Right cardiac atrium (tissue), 5 donors: ENCODE measurements at regions of chr5 and their contacts with region 1.

Region 1: DNA sequence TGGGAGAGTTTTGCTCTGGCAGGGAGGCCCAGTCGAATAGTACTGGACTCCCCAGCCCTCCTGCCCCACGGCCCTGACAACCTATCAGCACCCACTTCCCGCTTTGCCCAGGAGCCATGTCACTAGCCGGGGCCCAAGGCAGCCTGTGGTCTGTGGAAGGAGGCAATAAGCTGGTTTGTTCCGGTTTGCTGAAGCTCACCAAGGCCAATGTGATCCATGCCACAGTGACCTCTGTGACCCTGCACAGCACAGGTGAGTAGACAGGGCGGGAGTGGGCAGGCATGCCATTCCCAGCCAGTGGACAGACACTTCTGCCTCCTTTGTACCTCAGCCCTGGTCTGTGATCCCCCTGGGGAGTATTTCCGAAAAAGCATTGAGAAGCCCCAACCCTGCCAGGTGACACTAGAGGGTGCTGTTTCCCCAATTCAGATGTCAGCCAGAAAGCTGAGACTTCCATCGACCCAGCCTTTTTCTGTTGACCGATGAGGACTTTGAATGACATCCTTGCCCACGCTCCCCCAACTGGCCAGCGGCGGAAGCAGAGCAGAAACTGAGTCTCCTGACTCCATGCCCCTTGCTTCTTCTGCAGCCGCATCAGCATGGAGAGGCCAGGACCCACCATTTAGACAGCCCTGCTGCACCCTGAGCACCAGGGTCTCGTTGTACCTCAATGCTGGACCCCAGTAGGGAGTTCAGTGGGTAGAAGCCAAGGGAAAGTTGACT is 9.6 kb downstream of the PCYOX1L start:
- DNase-seq: peak; percentile 63 to 75 (median 71)
- ATAC-seq: peak; percentile 52 to 58
- H3K4me3 ChIP-seq: no peak overlapping the region
- H3K27ac ChIP-seq: no peak overlapping the region
- H3K4me1 ChIP-seq: no peaks in the 10 kb centered on the region
- H3K27me3 ChIP-seq: no peaks in the 10 kb centered on the region

Region 2: DNA sequence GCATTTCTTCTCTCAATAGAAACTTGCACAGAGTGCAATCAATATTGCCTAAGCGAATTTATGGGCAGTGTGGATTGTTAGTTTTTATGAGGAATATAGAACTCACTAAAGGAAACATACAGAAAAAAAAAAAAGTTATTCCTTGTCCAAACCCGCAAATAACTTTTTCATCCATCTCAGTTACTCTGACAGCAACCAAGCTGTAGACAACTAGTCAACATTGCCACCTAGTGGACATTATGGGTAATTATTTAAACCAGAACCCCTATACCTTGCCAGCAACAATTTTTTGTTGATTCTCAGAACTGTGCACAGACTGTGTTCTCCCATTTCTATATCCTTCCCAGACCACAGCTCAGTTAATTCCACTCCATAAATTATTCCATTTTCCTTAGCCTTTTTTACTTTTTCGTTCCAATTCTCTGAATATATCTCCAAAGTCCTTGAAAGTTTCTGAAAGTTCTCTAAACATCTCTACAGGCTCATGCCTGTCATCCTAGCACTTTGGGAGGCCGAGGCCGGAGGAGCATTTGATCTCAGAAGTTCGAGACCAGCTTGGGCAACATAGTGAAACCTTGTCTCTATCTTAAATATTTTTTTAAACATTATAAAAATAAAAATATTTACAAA is 98.4 kb before region 1 on chr5:
- intact Hi-C with region 1: loop called in 3 of 4 experiments (anchors 5 to 10 kb)
- DNase-seq: no peak
- ATAC-seq: no peak
- H3K4me3 ChIP-seq: no peak overlapping the region
- H3K27ac ChIP-seq: no peak overlapping the region
- H3K4me1 ChIP-seq: peaks cover 2% of the 10 kb centered on the region
- H3K27me3 ChIP-seq: no peaks in the 10 kb centered on the region

Region 3: DNA sequence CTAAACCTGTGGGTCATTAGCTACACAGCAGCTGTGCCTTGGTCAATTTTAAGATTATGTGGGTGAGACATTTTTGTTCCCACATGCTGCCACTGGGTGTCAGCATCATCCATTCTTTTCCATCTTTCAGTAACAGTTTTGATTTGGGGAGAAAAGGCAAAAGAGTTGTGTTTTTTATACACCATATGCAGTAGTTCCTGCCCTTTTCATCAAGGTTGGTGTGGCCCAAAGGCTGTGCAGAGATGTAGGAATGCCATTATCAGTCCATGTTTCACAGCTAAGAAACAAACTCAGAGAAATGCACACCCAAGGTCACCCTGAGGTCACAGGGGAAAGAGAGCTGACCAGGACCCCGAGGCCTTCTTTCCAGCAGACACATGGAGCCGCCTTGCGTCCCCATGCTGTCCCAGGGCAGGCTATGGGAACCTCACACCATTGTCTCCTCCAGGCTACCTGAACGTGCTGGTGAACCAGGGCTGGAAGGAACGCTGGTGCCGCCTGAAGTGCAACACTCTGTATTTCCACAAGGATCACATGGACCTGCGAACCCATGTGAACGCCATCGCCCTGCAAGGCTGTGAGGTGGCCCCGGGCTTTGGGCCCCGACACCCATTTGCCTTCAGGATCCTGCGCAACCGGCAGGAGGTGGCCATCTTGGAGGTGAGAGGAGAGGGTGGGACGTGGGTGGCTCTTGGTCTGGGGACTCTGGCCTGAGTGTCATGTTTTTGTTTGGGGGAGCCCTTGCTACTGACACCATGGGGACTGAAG is 49.9 kb before region 1 on chr5:
- intact Hi-C with region 1: loop called in 1 of 4 experiments (anchors 5 kb)
- DNase-seq: no peak
- ATAC-seq: no peak
- H3K4me3 ChIP-seq: no peak overlapping the region
- H3K27ac ChIP-seq: peak overlapping the region; percentile 15
- H3K4me1 ChIP-seq: peaks cover 5% of the 10 kb centered on the region
- H3K27me3 ChIP-seq: no peaks in the 10 kb centered on the region

Region 4: DNA sequence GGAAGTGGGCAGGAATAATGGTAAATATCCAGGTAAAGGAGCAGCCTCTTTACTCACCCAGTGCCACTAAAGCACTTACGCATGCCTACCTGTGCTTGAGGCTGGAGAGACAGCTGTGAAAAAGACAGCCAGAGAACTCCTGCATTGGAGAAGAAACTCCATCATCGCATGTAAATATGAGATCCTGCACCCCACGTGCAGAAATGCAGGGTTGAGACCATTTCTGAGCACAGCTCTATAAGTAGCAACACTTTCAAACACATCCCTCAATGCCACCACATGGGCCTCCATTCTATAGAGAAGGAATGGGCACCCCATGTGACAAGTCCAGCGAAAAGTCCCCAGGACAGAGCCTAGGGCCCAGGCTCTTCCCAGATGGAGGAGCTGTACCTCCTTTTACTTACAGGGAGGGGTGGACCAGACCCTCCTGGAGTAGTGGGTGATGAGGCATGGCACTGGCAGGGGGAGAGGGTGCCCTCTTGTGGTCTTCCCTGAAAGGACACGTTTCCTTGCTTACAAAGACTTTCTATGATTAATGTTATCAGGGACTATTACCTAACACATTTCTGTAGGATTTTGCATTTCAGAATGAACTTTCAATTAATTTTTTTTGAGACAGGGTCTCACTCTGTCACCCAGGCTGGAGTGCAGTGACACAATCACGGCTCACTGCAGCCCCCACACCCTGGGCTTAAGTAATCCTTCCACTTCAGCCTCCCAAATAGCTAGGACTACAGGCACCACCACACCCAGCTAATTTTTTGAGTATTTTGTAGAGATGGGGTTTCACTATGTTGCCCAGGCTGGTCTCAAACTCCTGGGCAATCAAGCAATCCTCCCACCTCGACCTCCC is 67.0 kb after region 1 on chr5:
- intact Hi-C with region 1: loop called in 1 of 4 experiments (anchors 5 kb)
- DNase-seq: peak; percentile 65 to 86 (median 81)
- ATAC-seq: peak; percentile 17 to 34
- H3K4me3 ChIP-seq: no peak overlapping the region
- H3K27ac ChIP-seq: peak overlapping the region; percentile 29
- H3K4me1 ChIP-seq: peaks cover 15% of the 10 kb centered on the region
- H3K27me3 ChIP-seq: no peaks in the 10 kb centered on the region

Region 5: DNA sequence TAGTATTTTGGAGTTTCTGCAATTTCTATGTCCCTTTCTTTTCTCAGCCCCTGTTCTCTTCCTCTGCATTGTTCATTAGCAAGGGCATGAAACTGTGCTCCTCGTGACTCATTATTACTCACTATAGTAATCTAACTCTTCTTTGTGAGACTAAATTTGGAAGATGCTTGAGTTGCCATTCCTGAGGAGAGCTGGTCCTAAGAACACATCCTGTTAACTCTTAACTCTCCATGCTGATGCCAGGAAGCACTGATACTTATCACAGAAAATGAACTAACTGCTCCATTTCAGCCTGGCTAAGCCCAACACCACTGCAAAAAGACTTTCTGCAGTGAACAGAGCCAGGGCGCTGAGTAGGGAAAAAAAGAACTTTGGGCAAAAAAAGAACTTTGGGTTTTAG is 194.4 kb after region 1 on chr5:
- intact Hi-C with region 1: loop called in 2 of 4 experiments (anchors 5 to 10 kb)
- DNase-seq: no peak
- ATAC-seq: peak; percentile 92 to 95
- H3K4me3 ChIP-seq: no peak overlapping the region
- H3K27ac ChIP-seq: peak overlapping the region; percentile 96
- H3K4me1 ChIP-seq: peaks cover 8% of the 10 kb centered on the region
- H3K27me3 ChIP-seq: no peaks in the 10 kb centered on the region

Region 6: DNA sequence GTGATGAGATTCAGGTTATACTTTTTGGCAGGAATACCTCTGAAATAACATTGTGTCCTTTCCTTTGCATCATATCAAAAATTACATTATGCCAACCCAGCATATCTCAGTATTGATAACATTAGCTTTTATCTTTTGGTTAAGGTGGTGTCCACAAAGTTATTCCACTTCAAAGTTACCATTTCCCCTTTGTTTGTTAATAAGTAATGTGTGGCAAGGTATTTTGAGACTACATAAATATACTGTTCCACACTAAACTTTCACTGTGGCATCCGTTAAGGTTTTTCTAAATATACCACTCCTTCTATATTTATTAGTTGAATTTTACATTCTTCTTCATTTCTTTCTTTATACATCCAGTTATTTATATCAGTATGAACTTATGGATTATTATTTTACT is 199.8 kb after region 1 on chr5:
- intact Hi-C with region 1: loop called in 2 of 4 experiments (anchors 5 to 10 kb)
- DNase-seq: no peak
- ATAC-seq: no peak
- H3K4me3 ChIP-seq: no peak overlapping the region
- H3K27ac ChIP-seq: no peak overlapping the region
- H3K4me1 ChIP-seq: peaks cover 5% of the 10 kb centered on the region
- H3K27me3 ChIP-seq: no peaks in the 10 kb centered on the region